ENCODE measurements at regions of chr1 and their contacts with region 1.

Region 1: DNA sequence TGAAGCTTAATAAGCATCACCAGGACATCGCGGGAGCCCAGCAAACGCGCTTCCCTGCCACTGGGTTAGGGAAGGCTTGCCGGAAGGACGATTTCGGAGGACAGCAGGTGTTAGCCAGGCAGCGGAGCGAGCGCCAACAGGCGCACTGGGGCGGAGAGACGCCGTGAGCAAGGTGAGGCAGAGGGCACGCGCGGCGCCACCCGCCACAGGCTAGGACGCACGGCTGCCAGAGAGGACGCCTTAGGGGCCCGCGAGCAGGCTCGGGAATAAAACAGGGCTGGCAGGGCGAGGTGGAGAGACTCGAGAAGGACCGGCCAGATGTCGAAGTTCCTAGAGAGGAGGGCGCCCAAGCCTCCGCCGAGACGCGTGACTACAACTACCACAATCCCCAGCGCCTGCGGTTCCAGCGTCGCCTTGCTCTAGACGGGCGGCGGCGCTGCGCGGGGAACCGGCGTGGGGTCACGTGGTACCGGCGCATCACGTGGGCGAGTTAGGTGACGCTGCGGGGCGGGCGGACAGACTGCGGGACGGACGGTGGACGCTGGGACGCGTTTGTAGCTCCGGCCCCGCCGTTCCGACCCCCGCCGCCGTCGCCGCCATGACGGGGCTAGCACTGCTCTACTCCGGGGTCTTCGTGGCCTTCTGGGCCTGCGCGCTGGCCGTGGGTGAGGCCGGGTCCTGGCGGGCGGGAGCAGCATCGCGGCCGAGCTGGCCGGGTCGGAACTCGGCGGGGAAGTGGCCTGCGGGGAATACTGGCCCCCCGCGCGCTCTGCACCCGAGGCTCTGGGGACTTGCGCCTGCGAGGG is at the start of gene ATP6V0B:
- DNase-seq: peak; percentile 95
- H3K4me3 Mint-ChIP-seq: peak within 1 kb of the TSS; percentile 94
- H3K27ac Mint-ChIP-seq: peak within 1 kb of the TSS; percentile 94
- H3K4me1 Mint-ChIP-seq: peaks cover 35% of the 10 kb centered on the region
- H3K27me3 Mint-ChIP-seq: no peaks in the 10 kb centered on the region
- CTCF ChIP-seq: no peak
- total RNA-seq, gene ATP6V0B: 120 and 141 TPM in 2 replicates

Region 2: DNA sequence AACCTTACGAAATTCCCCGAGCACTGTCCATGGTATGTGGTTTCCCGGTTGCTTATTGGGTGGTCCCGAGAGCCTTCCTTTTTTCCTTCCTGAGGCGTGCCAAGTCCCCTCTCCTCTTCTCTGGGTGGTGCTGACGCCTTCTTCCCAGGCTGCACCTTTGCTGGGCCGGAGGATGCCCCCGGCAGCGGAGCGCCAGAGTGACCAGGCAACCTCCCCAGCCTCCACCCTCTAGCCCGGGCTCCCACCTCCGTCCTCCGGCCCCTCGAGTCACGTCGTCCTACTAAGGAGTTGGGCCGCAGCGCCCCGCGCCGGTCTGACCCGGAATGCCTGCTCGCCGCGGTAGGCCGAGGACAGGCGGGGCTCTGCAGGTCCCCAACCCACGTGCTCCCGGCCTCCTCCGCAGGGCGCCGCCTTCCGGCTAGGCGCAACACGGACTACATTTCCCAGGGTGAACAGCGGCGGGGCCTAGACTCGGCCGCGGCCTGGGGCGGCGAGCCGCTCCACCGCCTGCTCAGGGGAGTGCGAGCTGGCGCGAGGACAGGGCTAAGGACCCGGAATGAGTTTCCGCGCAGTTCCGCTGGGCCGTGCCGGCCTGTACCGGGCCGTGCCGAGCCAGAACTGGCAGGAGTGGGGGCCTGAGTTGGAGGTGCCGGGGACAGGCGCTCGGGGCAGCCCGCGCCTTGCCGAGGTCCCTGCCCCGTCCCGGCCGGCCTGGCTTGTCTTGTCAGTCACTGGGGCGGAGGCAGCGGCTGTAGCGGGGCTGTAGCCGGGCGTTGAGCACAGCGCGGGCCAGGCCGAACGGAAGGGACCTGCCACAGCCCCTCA is 28.2 kb before region 1 on chr1 and contains the start of gene IPO13:
- CTCF ChIA-PET with region 1: interaction called, 5 read pairs
- POLR2A ChIA-PET with region 1: interaction called, 28 read pairs
- intact Hi-C with region 1: loop called (anchors 1 kb)
- DNase-seq: peak; percentile 94
- H3K4me3 Mint-ChIP-seq: peak within 1 kb of the TSS; percentile 99
- H3K27ac Mint-ChIP-seq: peak within 1 kb of the TSS; percentile 99
- H3K4me1 Mint-ChIP-seq: peaks cover 30% of the 10 kb centered on the region
- H3K27me3 Mint-ChIP-seq: no peaks in the 10 kb centered on the region
- CTCF ChIP-seq: peak; percentile 56
- total RNA-seq, gene IPO13: 23.9 and 31.4 TPM in 2 replicates

Region 3: GRCh38 chr1:43991476-43992231 is 17.0 kb after region 1 on chr1 and contains the start of gene CCDC24:
- CTCF ChIA-PET with region 1: interaction called, 5 read pairs
- POLR2A ChIA-PET with region 1: interaction called, 30 read pairs
- intact Hi-C with region 1: no loop called
- DNase-seq: peak; percentile 86
- H3K4me3 Mint-ChIP-seq: peak within 1 kb of the TSS; percentile 89
- H3K27ac Mint-ChIP-seq: peak within 1 kb of the TSS; percentile 92
- H3K4me1 Mint-ChIP-seq: no peaks in the 10 kb centered on the region
- H3K27me3 Mint-ChIP-seq: no peaks in the 10 kb centered on the region
- CTCF ChIP-seq: no peak
- total RNA-seq, gene CCDC24: 3.6 and 4.8 TPM in 2 replicates

Measured in MCF 10A (cell line).